ACHN (cell line): ENCODE measurements at regions of chr12 and their contacts with region 1.

Region 1: GRCh38 chr12:11486623-11487444 is 91.5 kb upstream of the PRB2 start:
- DNase-seq: peak; percentile 93

Region 2: DNA sequence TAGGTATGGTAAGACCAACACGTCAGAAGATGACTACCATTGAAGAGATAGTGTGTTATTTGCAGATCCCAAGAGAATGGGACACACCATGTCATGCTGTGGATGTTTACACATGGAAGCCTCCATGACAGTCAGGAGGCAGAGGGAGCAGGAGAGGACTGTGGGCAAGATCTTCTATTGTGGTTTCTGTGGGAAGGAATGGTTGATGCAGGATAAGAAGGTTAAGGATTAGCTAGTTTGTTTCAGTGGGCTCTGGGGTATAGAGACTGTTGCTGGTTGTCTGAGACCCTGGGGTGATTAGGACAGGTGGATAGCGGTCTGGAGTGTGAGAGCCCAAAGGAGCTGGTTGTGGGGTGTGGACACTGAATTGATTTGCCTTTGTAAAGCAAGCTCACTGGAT is 707.7 kb before region 1 on chr12:
- in situ Hi-C with region 1: loop called (anchors 25 kb)
- DNase-seq: no peak

Region 3: DNA sequence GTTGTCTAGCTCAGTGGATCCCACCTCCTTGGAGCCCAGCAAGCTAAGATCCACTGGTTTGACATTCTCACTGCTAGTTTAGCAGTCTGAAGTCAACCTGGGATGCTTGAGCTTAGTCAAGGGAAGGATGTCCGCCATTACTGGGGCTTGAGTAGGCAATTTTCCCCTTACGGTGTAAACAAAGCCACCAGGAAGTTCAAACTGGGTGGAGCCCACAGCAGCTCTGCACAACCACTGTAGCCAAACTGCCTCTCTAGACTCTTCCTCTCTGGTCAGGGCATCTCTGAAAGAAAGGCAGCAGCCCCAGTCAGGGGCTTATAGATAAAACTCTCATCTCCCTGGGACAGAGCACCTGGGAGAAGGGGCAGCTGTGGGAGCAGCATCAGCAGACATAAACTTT is 378.0 kb before region 1 on chr12:
- in situ Hi-C with region 1: no loop called
- DNase-seq: no peak

Region 4: DNA sequence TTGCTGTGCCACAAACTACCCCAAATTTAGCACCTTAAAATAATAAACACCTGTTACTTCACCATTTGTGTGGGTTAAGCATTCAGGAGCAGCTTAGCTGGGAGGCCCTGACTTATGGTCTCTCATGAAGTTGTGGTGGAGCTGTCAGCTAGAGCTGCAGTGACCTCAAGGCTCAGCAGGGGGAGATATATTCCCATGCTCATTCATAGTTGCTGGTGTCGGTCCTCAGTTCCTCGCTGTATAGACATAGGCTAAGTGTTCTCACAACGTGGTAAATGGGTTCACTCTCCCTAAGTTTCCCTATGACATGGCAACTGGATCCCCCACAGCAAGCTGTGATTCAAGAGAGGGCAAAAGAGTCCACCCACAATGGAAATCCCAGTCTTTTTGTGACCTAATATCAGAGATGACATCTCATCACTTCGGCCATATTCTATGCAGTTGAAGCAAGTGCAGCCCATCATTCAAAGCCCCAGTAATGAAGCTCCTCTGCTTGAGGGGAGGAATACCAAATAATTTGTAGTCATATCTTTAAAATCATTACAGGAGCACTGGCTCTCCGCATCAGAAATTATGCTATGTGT is 258.4 kb before region 1 on chr12:
- in situ Hi-C with region 1: loop called (anchors 25 kb)
- DNase-seq: peak; percentile 64

Region 5: GRCh38 chr12:11412731-11413130 is 74.1 kb before region 1 on chr12:
- in situ Hi-C with region 1: no loop called
- DNase-seq: no peak

Region 6: DNA sequence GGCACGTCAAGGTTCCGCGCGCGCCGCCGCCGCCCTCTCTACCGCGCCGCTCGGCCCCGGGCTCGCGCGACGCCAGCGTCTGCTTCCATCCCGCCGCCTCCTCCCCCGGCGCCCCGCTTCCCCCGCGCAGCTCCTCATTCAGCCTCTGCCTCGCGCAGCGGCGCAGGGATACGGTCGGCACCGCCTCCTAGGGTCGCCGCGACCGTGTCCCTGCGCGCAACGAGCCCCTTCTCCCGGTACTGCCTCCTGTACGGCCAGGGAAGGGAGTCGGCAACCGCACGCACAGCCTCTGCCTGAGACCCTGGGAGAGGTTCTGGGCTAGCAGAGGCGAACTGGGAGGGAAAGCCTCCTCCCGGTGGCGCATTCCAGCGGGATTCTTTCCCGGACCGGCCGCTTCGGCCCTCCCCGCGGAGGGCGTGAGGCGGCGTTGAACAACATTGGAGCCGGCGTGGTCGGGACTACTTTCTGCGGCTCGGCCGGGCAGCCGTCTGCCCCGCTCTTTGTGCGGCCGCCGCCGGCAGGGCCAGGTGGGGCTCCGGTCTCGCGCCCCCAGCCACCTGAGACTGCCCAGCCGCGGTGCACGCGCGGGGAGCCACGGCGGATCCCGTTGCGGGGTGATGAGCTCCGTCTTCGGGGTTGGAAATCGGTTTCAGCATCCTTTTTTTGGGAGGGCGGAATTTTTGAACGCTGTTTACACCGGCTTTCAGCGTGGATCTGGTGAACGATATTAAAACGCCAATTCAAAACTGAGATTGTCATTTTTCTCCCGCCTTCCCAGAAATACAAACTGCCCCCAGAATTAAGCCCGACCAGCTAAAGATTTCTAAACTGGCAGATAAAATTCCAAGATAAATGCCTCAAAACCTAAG is 780.3 kb after region 1 on chr12 and contains the start of gene LRP6:
- in situ Hi-C with region 1: no loop called
- DNase-seq: peak; percentile 97